Head of caudate nucleus (tissue), 42 donors: ENCODE measurements at regions of chr22 and their contacts with region 1.

Region 1: DNA sequence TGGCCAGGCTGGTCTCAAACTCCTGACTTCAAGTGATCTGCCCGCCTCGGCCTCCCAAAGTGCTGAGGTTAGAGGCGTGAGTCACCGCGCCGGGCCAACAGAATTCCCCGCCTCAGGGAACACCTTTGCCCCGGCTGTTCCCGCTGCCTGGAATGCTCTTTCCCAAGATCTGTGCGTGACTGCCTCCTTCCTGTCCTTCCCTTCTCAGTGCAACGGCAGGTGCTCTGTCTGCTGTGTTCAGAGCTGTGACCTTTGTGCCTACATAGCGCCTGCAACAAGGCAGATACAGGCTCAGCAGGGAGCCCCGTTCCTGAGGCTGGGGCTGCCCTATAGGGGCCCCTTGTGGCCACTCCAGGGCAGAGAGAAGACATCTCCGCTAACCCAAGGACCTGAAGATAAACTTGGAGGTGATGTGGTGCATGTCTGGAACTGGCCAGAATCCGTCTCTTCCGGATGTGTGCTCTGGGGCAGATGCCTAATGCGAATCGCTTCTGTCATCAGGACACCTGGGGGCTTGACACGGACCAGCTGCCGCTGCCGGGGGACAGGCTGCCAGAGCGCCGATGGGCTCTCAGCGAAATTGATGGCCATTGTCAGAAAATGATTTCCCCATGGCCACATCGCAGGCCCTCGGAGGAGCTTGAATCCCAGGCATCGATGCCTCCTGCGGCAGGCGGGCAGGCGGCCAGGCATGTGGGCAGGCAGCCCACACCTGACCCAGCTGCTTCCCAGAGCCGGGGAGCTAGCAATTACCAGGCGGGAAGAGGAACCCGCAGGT is 43.5 kb upstream of the TCF20 start:
- DNase-seq: peak in 21 of 42 donors; percentile 22 to 63 (median 47)

Region 2: DNA sequence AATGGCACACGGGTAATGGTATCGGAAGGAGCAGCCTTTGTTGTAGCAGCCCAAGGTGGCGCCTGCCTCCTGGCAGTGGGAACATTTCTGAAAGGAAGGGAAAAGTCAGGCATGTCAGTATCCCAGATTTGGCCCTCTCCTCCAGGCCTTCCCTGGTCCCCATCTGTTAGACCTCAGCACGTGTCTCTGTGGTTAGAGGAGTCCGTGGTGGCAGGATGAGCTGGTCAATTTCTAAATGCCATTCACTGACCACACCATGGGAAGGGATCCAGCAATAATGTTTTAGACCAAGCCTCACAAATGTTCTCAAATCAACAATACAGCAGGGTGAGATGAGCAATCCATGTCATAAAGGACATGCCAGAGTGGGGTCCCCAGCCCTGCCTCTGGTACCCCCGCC is 134.4 kb before region 1 on chr22:
- intact Hi-C with region 1: loop called (anchors 10 kb)
- DNase-seq: no peak